Activated CD8-positive, alpha-beta T cell treated with anti-CD3 and anti-CD28 coated beads for 36 hours (primary cell): ENCODE measurements at regions of chr6 and their contacts with region 1.

Region 1: DNA sequence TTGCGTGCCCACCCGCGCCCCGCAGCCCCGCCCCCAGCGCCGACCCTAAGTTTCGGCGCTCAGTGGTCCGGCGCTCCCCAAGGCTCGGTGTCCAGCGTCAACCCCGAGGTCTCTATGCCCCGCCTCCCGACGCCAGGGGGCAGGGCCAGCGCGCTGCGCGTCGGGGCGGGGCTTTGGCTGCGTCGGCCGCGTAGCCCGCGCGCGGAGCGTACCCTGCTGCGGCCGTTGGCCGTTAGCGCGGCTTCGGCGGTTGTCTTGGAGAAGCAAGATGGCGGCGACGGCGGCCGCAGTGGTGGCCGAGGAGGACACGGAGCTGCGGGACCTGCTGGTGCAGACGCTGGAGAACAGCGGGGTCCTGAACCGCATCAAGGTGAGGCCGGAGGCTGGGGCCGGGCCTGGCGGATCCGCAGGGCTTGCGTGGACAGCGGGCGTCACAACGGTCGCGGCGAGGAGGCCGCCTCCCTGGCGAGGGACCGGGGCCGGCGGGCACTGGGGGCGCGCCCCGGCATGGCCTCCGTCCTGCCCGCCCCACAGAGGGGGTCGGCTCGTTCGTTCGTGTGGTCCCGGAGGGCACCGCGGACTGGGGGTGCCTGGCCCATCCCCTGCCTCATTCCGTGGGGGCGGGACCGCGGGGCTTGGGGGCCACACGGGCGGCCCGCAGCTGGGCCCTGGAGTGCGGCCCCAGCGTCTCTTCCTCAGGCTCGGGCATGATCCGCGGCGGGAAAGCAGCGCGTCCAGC is at the start of gene CEP43:
- DNase-seq: peak; percentile 92
- ATAC-seq: peak; percentile 97
- H3K4me3 Mint-ChIP-seq: peak within 1 kb of the TSS; percentile 85
- H3K27ac Mint-ChIP-seq: peak within 1 kb of the TSS; percentile 87
- H3K4me1 Mint-ChIP-seq: peaks cover 24% of the 10 kb centered on the region
- H3K27me3 Mint-ChIP-seq: no peaks in the 10 kb centered on the region
- CTCF ChIP-seq: no peak
- total RNA-seq, gene CEP43: 20.2 to 21.3 TPM

Region 2: GRCh38 chr6:166956444-166957086 is 42.7 kb before region 1 on chr6 and contains the start of gene RNASET2:
- CTCF ChIA-PET with region 1: interaction called, 7 read pairs
- POLR2A ChIA-PET with region 1: interaction called, 16 read pairs
- intact Hi-C with region 1: loop called (anchors 2 kb)
- DNase-seq: peak; percentile 99
- ATAC-seq: peak; percentile 86
- H3K4me3 Mint-ChIP-seq: peak within 1 kb of the TSS; percentile 90
- H3K27ac Mint-ChIP-seq: peak within 1 kb of the TSS; percentile 86
- H3K4me1 Mint-ChIP-seq: peaks cover 66% of the 10 kb centered on the region
- H3K27me3 Mint-ChIP-seq: no peaks in the 10 kb centered on the region
- CTCF ChIP-seq: no peak
- total RNA-seq, gene RNASET2: 69.2 to 70.2 TPM

Region 3: DNA sequence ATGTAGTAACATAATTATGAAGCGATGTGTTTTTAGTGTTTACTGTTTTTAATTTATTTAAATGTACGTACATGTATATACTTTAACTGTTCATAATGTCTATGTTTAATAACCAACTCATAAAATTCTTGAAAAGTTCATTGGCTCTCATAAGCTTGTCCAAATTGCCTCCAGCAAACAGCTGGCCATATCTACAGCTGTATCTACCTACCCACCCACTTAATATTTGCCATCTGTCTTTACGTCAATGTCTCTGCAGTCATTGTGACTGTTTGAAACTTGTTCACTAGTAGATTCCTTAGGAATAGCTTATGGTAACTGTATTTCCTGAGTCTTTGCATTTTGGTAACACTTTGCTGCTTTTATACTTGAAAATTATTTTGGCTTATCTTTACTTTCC is 18.0 kb before region 1 on chr6:
- CTCF ChIA-PET with region 1: no interaction called
- POLR2A ChIA-PET with region 1: no interaction called
- intact Hi-C with region 1: no loop called
- DNase-seq: no peak
- ATAC-seq: no peak
- H3K4me3 Mint-ChIP-seq: no peak overlapping the region
- H3K27ac Mint-ChIP-seq: no peak overlapping the region
- H3K4me1 Mint-ChIP-seq: no peaks in the 10 kb centered on the region
- H3K27me3 Mint-ChIP-seq: no peaks in the 10 kb centered on the region
- CTCF ChIP-seq: no peak

Region 4: GRCh38 chr6:167141667-167142432 is 142.5 kb after region 1 on chr6:
- CTCF ChIA-PET with region 1: interaction called, 17 read pairs
- POLR2A ChIA-PET with region 1: no interaction called
- intact Hi-C with region 1: loop called (anchors 5 kb)
- DNase-seq: peak; percentile 60
- ATAC-seq: peak; percentile 83
- H3K4me3 Mint-ChIP-seq: no peak overlapping the region
- H3K27ac Mint-ChIP-seq: no peak overlapping the region
- H3K4me1 Mint-ChIP-seq: peaks cover 5% of the 10 kb centered on the region
- H3K27me3 Mint-ChIP-seq: peaks cover 11% of the 10 kb centered on the region
- CTCF ChIP-seq: peak; percentile 84